HepG2 (cell line): ENCODE measurements at regions of chr20 and their contacts with region 1.

Region 1: DNA sequence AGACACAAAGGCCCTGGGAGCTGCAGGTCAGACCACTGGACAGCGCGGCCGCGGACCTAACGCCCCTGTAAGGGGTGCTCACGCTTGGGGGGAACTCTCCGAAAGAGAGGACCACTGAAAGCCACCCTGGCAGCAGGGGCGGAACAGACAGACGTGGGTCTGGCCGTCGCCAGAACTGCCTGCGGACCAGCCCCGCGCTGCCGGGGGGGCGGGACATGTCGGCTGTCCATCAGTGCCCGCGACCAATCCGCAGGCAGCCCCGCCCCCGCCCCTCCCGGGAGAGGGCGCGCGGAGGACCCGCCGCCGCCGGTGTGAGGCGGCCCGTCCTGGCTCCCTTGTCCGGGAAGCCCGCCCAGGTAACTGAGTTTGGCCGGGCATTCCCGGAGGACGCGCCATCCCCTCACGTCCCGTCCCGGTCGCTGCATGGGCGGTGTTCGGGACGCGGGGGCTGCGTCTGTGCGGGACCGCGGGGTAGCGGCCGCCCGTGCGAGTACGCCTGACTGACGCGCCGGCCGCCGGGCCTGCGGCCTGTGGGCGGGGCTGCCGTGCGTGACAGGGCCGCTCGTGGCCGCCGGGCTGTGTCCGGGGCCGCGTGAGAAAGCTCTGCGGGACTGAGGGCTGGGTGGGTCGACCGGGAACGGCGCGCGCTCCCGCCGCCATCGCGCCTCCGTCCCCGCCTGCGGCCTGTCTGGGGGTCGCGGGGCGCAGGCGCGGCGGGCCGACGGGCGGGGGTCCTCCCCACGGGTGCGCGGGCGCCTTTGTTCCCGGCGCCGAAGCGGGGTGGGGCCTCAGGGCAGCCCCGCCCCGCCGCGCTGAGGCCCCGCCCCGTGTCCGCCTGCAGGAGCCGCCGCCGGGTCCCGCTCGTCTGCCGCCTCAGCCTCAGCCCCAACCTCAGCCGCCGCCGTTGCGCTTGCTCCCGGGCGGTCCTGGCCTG is at the start of gene PLCG1:
- DNase-seq: peak; percentile 84
- ATAC-seq: peak; percentile 73
- H3K4me3 ChIP-seq: peak within 1 kb of the TSS; percentile 81 to 91 (median 85)
- H3K27ac ChIP-seq: peak within 1 kb of the TSS; percentile 88
- H3K4me1 ChIP-seq: peaks cover 80% of the 10 kb centered on the region
- H3K27me3 ChIP-seq: no peaks in the 10 kb centered on the region
- CTCF ChIP-seq: no peak; the same call in 1 of the 2 replicates
- EP300 ChIP-seq: peak in 1 of 2 experiments; percentile 8; a peak in 1 of 4 replicates
- POLR2A ChIP-seq: peak; percentile 80 to 91
- RAD21 ChIP-seq: peak; percentile 64; the same call in 1 of the 2 replicates
- total RNA-seq, gene PLCG1: 53.1 and 85.3 TPM in 2 replicates

Region 2: DNA sequence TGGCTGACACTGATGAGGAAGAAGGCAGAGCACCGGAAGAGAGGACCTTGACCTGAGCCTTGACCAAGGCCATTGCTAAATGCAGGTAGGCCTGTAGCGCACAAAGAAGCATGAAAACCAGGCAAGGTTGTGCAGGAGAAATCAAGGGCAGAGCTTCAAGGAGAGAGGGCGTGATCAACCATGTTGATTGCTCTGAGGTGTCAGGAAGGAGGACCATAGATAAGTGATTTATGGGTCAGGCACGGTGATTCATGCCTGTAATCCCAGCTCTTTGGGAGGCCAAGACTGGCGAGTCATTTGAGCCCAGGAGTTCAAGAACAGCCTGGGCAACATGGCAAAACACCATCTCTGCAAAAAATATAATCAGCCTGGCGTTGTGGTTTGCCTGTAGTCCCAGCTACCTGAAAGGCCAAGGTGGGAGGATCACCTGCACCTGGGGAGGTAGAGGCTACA is 12.8 kb after region 1 on chr20:
- CTCF ChIA-PET with region 1: no interaction called
- POLR2A ChIA-PET with region 1: interaction called, 13 read pairs
- in situ Hi-C with region 1: no loop called
- intact Hi-C with region 1: loop called (anchors 2 kb)
- DNase-seq: peak; percentile 51
- ATAC-seq: no peak
- H3K4me3 ChIP-seq: no peak overlapping the region
- H3K27ac ChIP-seq: peak overlapping the region; percentile 16
- H3K4me1 ChIP-seq: peaks cover 85% of the 10 kb centered on the region
- H3K27me3 ChIP-seq: no peaks in the 10 kb centered on the region
- CTCF ChIP-seq: no peak
- EP300 ChIP-seq: 0 out of 4 replicates have a peak, but pooled peaks of 1 of the 2 experiments have one; percentile 18
- POLR2A ChIP-seq: no peak
- RAD21 ChIP-seq: no peak

Region 3: GRCh38 chr20:41173161-41173721 is 36.3 kb after region 1 on chr20:
- CTCF ChIA-PET with region 1: interaction called, 13 read pairs
- POLR2A ChIA-PET with region 1: interaction called, 3 read pairs
- in situ Hi-C with region 1: no loop called
- intact Hi-C with region 1: loop called (anchors 2 kb)
- DNase-seq: peak; percentile 62
- ATAC-seq: peak; percentile 89
- H3K4me3 ChIP-seq: no peak overlapping the region
- H3K27ac ChIP-seq: no peak overlapping the region
- H3K4me1 ChIP-seq: no peaks in the 10 kb centered on the region
- H3K27me3 ChIP-seq: no peaks in the 10 kb centered on the region
- CTCF ChIP-seq: peak; percentile 98
- EP300 ChIP-seq: no peak
- POLR2A ChIP-seq: no peak
- RAD21 ChIP-seq: peak; percentile 98

Region 4: DNA sequence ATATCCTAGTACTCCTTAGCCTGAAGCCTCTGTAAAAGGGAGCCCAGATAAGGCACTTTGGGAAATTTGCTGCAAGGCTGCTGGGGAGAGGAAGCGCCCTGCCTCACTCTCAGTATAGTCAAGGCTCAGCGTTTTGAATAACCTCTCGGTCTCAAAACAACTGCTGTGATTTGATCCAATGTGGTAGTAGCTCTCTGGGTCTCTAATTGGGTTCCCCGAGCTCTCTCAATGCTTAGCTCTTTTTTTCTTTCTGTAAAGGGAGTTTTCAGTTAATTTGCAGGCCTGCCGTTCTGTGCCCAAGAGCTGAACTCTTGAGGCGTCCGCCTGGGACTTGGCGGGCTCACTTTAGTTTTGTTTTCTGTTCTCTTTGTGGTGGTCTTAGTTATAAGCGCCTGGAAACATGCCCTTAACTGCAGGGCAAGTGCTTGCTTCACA is 139.4 kb after region 1 on chr20:
- CTCF ChIA-PET with region 1: no interaction called
- POLR2A ChIA-PET with region 1: no interaction called
- in situ Hi-C with region 1: no loop called
- intact Hi-C with region 1: no loop called
- DNase-seq: no peak
- ATAC-seq: no peak
- H3K4me3 ChIP-seq: no peak overlapping the region
- H3K27ac ChIP-seq: no peak overlapping the region
- H3K4me1 ChIP-seq: peaks cover 6% of the 10 kb centered on the region; the same call in 1 of the 2 replicates
- H3K27me3 ChIP-seq: no peaks in the 10 kb centered on the region
- CTCF ChIP-seq: no peak
- EP300 ChIP-seq: no peak
- POLR2A ChIP-seq: no peak
- RAD21 ChIP-seq: no peak